ENCODE measurements at regions of chr19 and their contacts with region 1.

Region 1: GRCh38 chr19:47284324-47284899 is 9.7 kb downstream of the INAFM1 start:
- DNase-seq: peak in 6 of 9 experiments; percentile 39 to 78 (median 60)
- ATAC-seq: peak; percentile 69
- H3K4me3 ChIP-seq: no peak overlapping the region
- H3K4me3 Mint-ChIP-seq: no peak overlapping the region
- H3K27ac ChIP-seq: no peak overlapping the region
- H3K27ac Mint-ChIP-seq: no peak overlapping the region
- H3K4me1 ChIP-seq: no peaks in the 10 kb centered on the region
- H3K4me1 Mint-ChIP-seq: peaks cover 6% of the 10 kb centered on the region
- H3K27me3 ChIP-seq: no peaks in the 10 kb centered on the region
- H3K27me3 Mint-ChIP-seq: no peaks in the 10 kb centered on the region
- CTCF ChIP-seq: peak; percentile 82

Region 2: DNA sequence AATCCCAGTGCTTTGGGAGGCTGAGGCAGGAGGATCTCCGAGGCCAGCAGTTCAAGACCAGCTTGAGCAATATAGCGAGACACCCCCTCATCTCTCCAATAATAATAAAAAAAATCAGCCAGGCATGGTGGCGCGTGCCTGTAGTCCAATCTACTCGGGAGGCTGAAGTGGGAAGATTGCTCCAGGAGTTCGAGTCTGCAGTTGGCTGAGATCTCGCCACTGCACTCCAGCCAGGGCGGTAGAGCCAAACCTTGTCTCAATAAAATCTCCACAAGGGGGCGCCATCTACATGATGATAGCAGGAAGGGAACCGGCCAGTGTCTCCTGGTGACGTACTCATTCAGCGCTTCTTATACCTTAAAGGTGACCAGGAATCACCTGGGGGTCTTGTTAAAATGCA is 11.6 kb after region 1 on chr19:
- CTCF ChIA-PET with region 1: interaction called, 12 read pairs
- POLR2A ChIA-PET with region 1: no interaction called
- intact Hi-C with region 1: no loop called
- DNase-seq: peak; percentile 41 to 87 (median 76)
- ATAC-seq: peak; percentile 91
- H3K4me3 ChIP-seq: no peak overlapping the region
- H3K4me3 Mint-ChIP-seq: no peak overlapping the region
- H3K27ac ChIP-seq: no peak overlapping the region
- H3K27ac Mint-ChIP-seq: no peak overlapping the region
- H3K4me1 ChIP-seq: no peaks in the 10 kb centered on the region
- H3K4me1 Mint-ChIP-seq: peaks cover 3% of the 10 kb centered on the region
- H3K27me3 ChIP-seq: no peaks in the 10 kb centered on the region
- H3K27me3 Mint-ChIP-seq: no peaks in the 10 kb centered on the region
- CTCF ChIP-seq: peak; percentile 68

Region 3: GRCh38 chr19:47305309-47305751 is 20.9 kb after region 1 on chr19:
- CTCF ChIA-PET with region 1: interaction called, 11 read pairs
- POLR2A ChIA-PET with region 1: no interaction called
- intact Hi-C with region 1: no loop called
- DNase-seq: peak; percentile 13 to 73 (median 59)
- ATAC-seq: peak; percentile 54
- H3K4me3 ChIP-seq: no peak overlapping the region
- H3K4me3 Mint-ChIP-seq: no peak overlapping the region
- H3K27ac ChIP-seq: no peak overlapping the region
- H3K27ac Mint-ChIP-seq: no peak overlapping the region
- H3K4me1 ChIP-seq: no peaks in the 10 kb centered on the region
- H3K4me1 Mint-ChIP-seq: peaks cover 8% of the 10 kb centered on the region
- H3K27me3 ChIP-seq: no peaks in the 10 kb centered on the region
- H3K27me3 Mint-ChIP-seq: peaks cover 19% of the 10 kb centered on the region
- CTCF ChIP-seq: peak; percentile 89

Region 4: DNA sequence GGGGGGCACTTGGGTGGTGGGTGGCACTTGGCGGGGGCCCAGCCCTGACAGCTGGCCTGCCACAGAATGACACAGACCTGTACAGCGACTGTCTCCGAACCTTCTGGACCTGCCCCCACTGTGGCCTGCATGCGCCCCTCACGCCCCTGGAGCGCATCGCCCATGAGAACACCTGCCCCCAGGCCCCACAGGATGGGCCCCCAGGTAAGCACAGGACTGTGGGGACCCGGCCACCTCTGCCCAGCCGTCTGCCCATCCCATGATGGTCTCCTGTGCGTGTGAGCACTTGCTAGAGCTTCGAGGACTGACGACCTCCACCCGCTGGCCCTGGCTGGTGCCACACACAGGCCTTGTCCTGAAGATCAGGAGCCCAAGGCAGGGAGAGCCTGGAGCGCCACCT is 96.7 kb after region 1 on chr19:
- CTCF ChIA-PET with region 1: no interaction called
- POLR2A ChIA-PET with region 1: no interaction called
- intact Hi-C with region 1: no loop called
- DNase-seq: no peak
- ATAC-seq: no peak
- H3K4me3 ChIP-seq: no peak overlapping the region
- H3K4me3 Mint-ChIP-seq: no peak overlapping the region
- H3K27ac ChIP-seq: peak overlapping the region; percentile 19 to 42
- H3K27ac Mint-ChIP-seq: peak overlapping the region; percentile 77
- H3K4me1 ChIP-seq: peaks cover 17% of the 10 kb centered on the region
- H3K4me1 Mint-ChIP-seq: peaks cover 25% of the 10 kb centered on the region
- H3K27me3 ChIP-seq: no peaks in the 10 kb centered on the region
- H3K27me3 Mint-ChIP-seq: no peaks in the 10 kb centered on the region
- CTCF ChIP-seq: no peak

Region 5: DNA sequence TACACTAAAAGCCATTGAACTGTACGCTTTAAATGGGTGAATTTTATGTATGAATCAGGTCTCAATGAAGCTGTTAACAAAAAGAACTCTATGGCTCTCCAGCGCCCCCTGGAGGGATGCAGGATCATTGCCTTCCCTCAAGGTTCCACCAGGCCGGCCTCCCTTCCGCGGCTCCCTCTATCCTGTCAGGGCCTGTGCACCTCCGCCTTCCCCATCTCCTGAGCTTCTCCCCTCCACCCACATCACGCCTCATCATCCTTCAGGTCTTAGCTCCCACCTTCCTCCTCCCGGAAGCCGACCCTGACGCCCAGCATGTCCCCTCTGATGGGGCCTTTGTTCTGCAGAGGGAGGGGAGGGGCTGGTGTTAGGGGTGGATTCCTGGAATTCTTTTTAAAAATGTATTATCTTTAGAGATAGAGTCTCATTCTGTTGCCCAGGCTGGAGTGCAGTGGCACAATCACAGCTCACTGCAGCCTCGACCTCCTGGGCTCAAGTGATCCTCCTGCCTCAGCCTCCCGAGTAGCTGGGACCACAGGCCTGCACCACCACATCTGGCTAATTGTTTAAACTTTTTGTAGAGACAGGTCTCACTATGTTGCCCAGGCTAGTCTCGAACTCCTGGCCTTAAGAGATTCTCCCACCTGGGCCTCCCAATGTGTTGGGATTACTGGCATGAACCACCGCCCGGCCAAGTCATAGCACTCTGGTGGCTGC is 107.3 kb after region 1 on chr19:
- CTCF ChIA-PET with region 1: interaction called, 14 read pairs
- POLR2A ChIA-PET with region 1: no interaction called
- intact Hi-C with region 1: no loop called
- DNase-seq: peak; percentile 69 to 89 (median 81)
- ATAC-seq: peak; percentile 79
- H3K4me3 ChIP-seq: no peak overlapping the region
- H3K4me3 Mint-ChIP-seq: no peak overlapping the region
- H3K27ac ChIP-seq: no peak overlapping the region
- H3K27ac Mint-ChIP-seq: no peak overlapping the region
- H3K4me1 ChIP-seq: no peaks in the 10 kb centered on the region
- H3K4me1 Mint-ChIP-seq: peaks cover 4% of the 10 kb centered on the region
- H3K27me3 ChIP-seq: peaks cover 0 to 3% of the 10 kb centered on the region in 2 experiments
- H3K27me3 Mint-ChIP-seq: peaks cover 22% of the 10 kb centered on the region
- CTCF ChIP-seq: peak; percentile 88

Measured in CD8-positive, alpha-beta T cell (primary cell).